B cell (primary cell): ENCODE measurements at regions of chr1 and their contacts with region 1.

Region 1: DNA sequence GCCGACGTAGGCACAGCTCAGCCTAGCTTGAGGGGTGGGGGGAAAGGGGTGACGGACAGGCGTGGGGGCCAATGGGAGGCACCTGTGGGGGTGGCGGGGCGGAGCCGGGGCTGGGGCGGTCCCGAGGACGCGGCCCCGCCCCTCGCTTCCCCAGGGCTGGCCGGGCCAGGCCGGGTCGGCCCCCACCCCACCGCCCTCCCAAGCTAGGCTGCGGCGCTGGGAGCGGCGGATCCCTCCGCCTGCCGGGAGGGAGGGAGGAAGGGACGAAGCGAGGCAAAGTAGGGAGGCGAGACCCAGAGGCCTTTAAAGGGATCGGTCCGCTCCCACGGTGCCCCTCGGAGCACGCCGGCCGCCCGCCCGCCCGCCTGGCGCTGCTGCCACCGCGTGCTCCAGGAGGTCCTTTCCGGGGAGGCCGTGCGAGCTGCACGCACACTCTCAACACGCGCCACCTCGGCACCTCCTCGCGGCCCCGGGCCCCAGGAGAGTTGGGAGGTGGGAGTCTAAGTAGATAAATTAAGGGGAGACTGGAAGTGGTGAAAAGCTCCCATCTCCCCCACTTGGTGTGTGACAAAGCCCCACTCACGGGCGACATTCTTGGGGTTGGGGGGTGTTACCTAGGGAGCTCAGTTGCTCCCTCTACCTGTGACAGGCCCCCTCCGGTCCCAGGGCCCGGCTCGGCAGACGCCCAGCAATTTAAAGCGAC is 373 bp upstream of the MEF2D start:
- DNase-seq: peak; percentile 97
- ATAC-seq: peak; percentile 66
- H3K4me3 ChIP-seq: peak overlapping the region; percentile 51 to 99 (median 91)
- H3K4me3 Mint-ChIP-seq: peak overlapping the region; percentile 93
- H3K27ac ChIP-seq: peak overlapping the region; percentile 94 to 96
- H3K27ac Mint-ChIP-seq: peak overlapping the region; percentile 99
- H3K4me1 ChIP-seq: peaks cover 74 to 79% of the 10 kb centered on the region in 2 donors
- H3K4me1 Mint-ChIP-seq: peaks cover 78% of the 10 kb centered on the region
- H3K27me3 ChIP-seq: no peaks in the 10 kb centered on the region
- H3K27me3 Mint-ChIP-seq: no peaks in the 10 kb centered on the region
- CTCF ChIP-seq: peak; percentile 80

Region 2: GRCh38 chr1:156096640-156097391 is 404.1 kb before region 1 on chr1:
- CTCF ChIA-PET with region 1: no interaction called
- POLR2A ChIA-PET with region 1: no interaction called
- intact Hi-C with region 1: loop called (anchors 2 kb)
- DNase-seq: peak; percentile 97
- ATAC-seq: peak; percentile 87
- H3K4me3 ChIP-seq: peak overlapping the region in 3 of 5 experiments; percentile 3 to 47 (median 30)
- H3K4me3 Mint-ChIP-seq: peak overlapping the region; percentile 72
- H3K27ac ChIP-seq: peak overlapping the region; percentile 82 to 93
- H3K27ac Mint-ChIP-seq: peak overlapping the region; percentile 95
- H3K4me1 ChIP-seq: peaks cover 23 to 24% of the 10 kb centered on the region in 2 donors
- H3K4me1 Mint-ChIP-seq: peaks cover 31% of the 10 kb centered on the region
- H3K27me3 ChIP-seq: peaks cover 0 to 1% (median 0%) of the 10 kb centered on the region in 4 experiments
- H3K27me3 Mint-ChIP-seq: no peaks in the 10 kb centered on the region
- CTCF ChIP-seq: peak; percentile 95

Region 3: GRCh38 chr1:156319664-156320063 is 181.3 kb before region 1 on chr1:
- CTCF ChIA-PET with region 1: no interaction called
- POLR2A ChIA-PET with region 1: no interaction called
- intact Hi-C with region 1: no loop called
- DNase-seq: peak; percentile 47
- ATAC-seq: no peak
- H3K4me3 ChIP-seq: no peak overlapping the region
- H3K4me3 Mint-ChIP-seq: no peak overlapping the region
- H3K27ac ChIP-seq: no peak overlapping the region
- H3K27ac Mint-ChIP-seq: no peak overlapping the region
- H3K4me1 ChIP-seq: no peaks in the 10 kb centered on the region
- H3K4me1 Mint-ChIP-seq: no peaks in the 10 kb centered on the region
- H3K27me3 ChIP-seq: no peaks in the 10 kb centered on the region
- H3K27me3 Mint-ChIP-seq: no peaks in the 10 kb centered on the region
- CTCF ChIP-seq: peak; percentile 73

Region 4: DNA sequence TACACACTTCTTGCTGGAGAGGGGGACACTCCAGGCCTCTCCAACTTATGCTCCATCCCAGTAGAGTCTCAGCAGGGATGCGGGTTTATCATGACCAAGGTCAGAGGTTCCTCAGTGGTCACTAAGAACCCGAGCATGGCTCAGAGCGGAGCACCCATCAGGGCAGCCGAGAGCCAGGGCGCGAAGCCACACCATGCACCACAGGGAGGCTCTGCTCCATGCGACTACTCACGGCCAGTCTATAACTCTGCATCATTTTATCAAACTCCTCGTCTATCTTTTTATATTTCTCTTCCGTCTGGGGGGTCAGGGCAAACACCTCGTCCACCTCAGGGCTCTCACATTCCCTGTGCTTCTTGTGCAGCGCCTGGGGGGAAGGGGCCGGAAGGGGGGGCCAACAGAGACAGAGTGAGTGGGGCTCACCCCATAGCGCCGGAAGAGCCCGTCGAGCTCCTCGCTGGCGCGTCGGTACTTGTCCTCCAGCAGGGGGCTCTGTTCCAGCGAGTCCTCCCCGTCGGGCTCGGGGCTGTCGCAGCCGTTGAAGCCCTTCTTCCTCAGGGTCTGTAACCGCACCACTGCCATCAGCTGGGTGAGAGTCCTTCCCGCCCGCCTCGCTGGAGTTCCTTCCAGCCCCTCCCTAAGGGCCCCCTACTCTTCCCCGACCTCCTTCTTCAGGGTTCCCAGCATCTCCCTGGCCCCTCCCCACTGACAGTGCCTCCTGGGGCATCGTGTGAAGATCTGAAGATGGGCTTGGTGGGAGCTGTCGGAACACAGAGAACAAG is 20.3 kb before region 1 on chr1:
- CTCF ChIA-PET with region 1: interaction called, 383 read pairs
- POLR2A ChIA-PET with region 1: interaction called, 193 read pairs
- intact Hi-C with region 1: loop called (anchors 1 kb)
- DNase-seq: peak; percentile 85
- ATAC-seq: peak; percentile 84
- H3K4me3 ChIP-seq: no peak overlapping the region
- H3K4me3 Mint-ChIP-seq: peak overlapping the region; percentile 70
- H3K27ac ChIP-seq: peak overlapping the region; percentile 60 to 72
- H3K27ac Mint-ChIP-seq: peak overlapping the region; percentile 93
- H3K4me1 ChIP-seq: peaks cover 16 to 41% of the 10 kb centered on the region in 2 donors
- H3K4me1 Mint-ChIP-seq: peaks cover 54% of the 10 kb centered on the region
- H3K27me3 ChIP-seq: no peaks in the 10 kb centered on the region
- H3K27me3 Mint-ChIP-seq: no peaks in the 10 kb centered on the region
- CTCF ChIP-seq: peak; percentile 81

Region 5: DNA sequence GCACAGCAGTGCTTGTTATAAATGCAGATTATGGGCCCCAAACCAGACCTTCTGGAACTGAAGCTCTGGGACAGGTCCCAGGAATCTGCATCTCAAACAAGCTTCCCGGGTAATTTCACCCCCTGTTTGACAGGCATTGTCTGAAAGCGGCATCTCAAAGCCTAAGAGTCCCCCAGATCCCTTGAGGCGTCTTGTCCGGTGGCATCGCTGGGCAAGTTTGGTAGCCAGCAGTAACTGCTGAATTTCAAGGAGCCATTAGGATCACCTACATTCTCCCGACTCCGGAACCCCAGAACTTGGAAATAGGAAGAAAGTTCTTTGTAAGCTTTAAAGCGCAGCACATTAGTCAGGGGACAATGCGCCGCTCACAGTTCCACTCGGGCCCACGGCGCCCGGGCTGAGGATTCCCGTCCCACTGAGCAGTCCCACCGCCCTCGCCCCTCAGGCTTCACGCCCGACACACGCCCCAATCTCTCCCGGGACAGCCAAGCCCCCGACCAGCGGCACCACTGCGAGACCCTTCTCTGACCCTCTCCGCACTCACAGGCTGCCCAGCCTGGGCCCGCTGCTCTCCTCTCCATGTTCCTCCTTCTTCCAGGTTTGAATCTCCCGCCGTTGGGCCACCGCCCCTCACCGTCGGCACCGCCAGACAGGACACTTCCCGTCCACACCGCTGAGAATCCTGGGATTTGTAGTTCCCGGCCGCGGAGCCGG is 71.2 kb after region 1 on chr1 and contains the start of gene IQGAP3:
- CTCF ChIA-PET with region 1: interaction called, 6 read pairs
- POLR2A ChIA-PET with region 1: interaction called, 4 read pairs
- intact Hi-C with region 1: loop called (anchors 1 kb)
- DNase-seq: peak; percentile 88
- ATAC-seq: peak; percentile 96
- H3K4me3 ChIP-seq: peak within 1 kb of the TSS; percentile 6 to 45 (median 27)
- H3K4me3 Mint-ChIP-seq: peak within 1 kb of the TSS; percentile 85
- H3K27ac ChIP-seq: no peak within 1 kb of the TSS
- H3K27ac Mint-ChIP-seq: peak within 1 kb of the TSS; percentile 12
- H3K4me1 ChIP-seq: peaks cover 13 to 14% of the 10 kb centered on the region in 2 donors
- H3K4me1 Mint-ChIP-seq: peaks cover 13% of the 10 kb centered on the region
- H3K27me3 ChIP-seq: peaks cover 0 to 32% (median 14%) of the 10 kb centered on the region in 4 experiments
- H3K27me3 Mint-ChIP-seq: peaks cover 23% of the 10 kb centered on the region
- CTCF ChIP-seq: no peak
- total RNA-seq, gene IQGAP3: 0.07 TPM in 2 replicates

Region 6: DNA sequence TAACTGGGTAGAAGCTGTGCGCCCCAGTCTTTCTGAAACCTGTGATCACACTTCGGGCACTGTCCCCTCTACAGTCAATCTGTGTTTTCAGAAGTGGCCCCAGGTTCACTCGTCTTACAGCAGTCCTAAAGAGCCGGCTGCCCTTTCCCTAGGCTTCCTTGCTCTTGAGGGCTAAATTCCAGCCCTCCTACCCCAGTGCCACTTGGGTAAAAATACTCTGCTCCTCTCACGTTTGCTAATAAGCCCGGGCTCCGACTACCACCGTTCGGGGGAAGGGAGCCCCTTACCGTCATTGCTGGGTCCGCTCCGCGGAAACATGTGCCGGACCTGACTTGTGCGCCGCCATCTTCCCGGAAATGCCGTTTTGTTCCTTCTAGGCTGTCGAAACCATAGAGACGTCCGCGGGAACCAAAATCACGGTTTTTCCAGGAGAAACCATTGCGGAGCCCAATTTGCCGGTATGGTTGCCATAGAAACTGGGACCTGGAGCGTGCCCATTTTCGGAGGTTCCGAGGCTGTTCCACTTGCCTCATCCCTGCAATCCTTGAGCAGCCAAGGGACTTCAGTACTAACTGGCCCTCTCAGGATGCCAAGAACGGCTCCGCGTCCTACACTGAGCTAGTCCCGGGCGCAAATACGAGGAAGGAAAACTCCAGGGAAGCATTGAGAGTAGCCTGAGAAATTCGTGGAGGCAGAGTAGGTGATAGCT is 100.3 kb after region 1 on chr1 and contains the start of gene GPATCH4:
- CTCF ChIA-PET with region 1: interaction called, 8 read pairs
- POLR2A ChIA-PET with region 1: interaction called, 5 read pairs
- intact Hi-C with region 1: loop called (anchors 2 kb)
- DNase-seq: peak; percentile 84
- ATAC-seq: peak; percentile 74
- H3K4me3 ChIP-seq: peak within 1 kb of the TSS; percentile 85 to 100 (median 99)
- H3K4me3 Mint-ChIP-seq: peak within 1 kb of the TSS; percentile 97
- H3K27ac ChIP-seq: peak within 1 kb of the TSS; percentile 72 to 83
- H3K27ac Mint-ChIP-seq: peak within 1 kb of the TSS; percentile 96
- H3K4me1 ChIP-seq: peaks cover 22 to 30% of the 10 kb centered on the region in 2 donors
- H3K4me1 Mint-ChIP-seq: peaks cover 38% of the 10 kb centered on the region
- H3K27me3 ChIP-seq: no peaks in the 10 kb centered on the region
- H3K27me3 Mint-ChIP-seq: no peaks in the 10 kb centered on the region
- CTCF ChIP-seq: no peak
- total RNA-seq, gene GPATCH4: 31.4 and 38.3 TPM in 2 replicates

Region 7: GRCh38 chr1:156616463-156616862 is 115.5 kb after region 1 on chr1:
- CTCF ChIA-PET with region 1: no interaction called
- POLR2A ChIA-PET with region 1: no interaction called
- intact Hi-C with region 1: no loop called
- DNase-seq: no peak
- ATAC-seq: no peak
- H3K4me3 ChIP-seq: no peak overlapping the region
- H3K4me3 Mint-ChIP-seq: no peak overlapping the region
- H3K27ac ChIP-seq: no peak overlapping the region
- H3K27ac Mint-ChIP-seq: no peak overlapping the region
- H3K4me1 ChIP-seq: no peaks in the 10 kb centered on the region
- H3K4me1 Mint-ChIP-seq: no peaks in the 10 kb centered on the region
- H3K27me3 ChIP-seq: peaks cover 0 to 53% (median 19%) of the 10 kb centered on the region in 4 experiments
- H3K27me3 Mint-ChIP-seq: peaks cover 55% of the 10 kb centered on the region
- CTCF ChIP-seq: no peak

Region 8: GRCh38 chr1:156692925-156693847 is 192.2 kb after region 1 on chr1:
- CTCF ChIA-PET with region 1: no interaction called
- POLR2A ChIA-PET with region 1: no interaction called
- intact Hi-C with region 1: no loop called
- DNase-seq: no peak
- ATAC-seq: no peak
- H3K4me3 ChIP-seq: no peak overlapping the region
- H3K4me3 Mint-ChIP-seq: no peak overlapping the region
- H3K27ac ChIP-seq: no peak overlapping the region
- H3K27ac Mint-ChIP-seq: no peak overlapping the region
- H3K4me1 ChIP-seq: peaks cover 11 to 21% of the 10 kb centered on the region in 2 donors
- H3K4me1 Mint-ChIP-seq: peaks cover 16% of the 10 kb centered on the region
- H3K27me3 ChIP-seq: peaks cover 0 to 75% (median 35%) of the 10 kb centered on the region in 4 experiments
- H3K27me3 Mint-ChIP-seq: peaks cover 59% of the 10 kb centered on the region
- CTCF ChIP-seq: no peak

Region 9: DNA sequence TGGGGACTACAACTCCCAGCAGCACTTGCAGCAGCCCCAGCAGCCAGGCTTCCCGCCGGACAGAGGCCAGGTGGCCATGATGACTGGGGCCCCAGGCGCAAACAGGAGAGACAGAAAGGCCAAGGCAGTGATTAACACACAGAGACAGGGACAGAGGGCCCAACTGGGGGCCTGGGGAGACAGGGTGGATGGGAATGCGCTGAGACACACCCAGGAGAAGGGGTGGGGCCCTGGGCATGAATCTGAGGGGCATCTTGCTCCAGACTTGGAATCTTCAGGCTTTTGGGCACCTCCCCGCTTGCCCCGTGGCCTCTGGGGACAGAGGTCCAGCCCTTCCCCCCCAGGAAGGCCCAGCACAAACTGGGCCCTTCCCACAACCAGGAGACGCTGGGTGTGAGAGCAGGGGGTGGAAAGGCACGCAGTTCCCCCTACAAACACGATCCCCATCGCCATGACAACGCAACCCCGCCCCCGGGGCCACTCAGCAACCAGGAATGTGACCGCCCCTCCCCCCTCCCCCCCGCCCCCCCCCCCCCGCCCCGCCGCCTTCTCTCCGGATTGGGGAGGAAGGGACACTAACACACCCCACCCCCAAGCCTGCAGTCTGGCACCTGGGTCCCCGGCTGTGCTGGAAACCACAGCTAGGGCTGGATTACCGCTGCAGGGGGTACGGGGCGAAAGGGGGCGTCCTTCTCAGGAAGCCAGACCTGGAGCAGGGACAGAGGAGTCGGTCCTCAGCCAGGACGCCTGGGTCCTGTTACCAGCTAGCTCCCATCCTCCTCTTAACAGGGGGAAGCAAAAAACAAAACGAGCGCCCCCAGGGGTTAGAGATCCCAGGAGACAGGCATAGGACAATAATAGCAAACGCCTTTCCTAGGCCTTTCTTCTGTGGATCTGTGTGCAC is 246.0 kb after region 1 on chr1:
- CTCF ChIA-PET with region 1: no interaction called
- POLR2A ChIA-PET with region 1: interaction called, 3 read pairs
- intact Hi-C with region 1: loop called (anchors 2 kb)
- DNase-seq: peak; percentile 78
- ATAC-seq: peak; percentile 3
- H3K4me3 ChIP-seq: peak overlapping the region in 4 of 5 experiments; percentile 34 to 55 (median 38)
- H3K4me3 Mint-ChIP-seq: peak overlapping the region; percentile 93
- H3K27ac ChIP-seq: peak overlapping the region; percentile 80 to 88
- H3K27ac Mint-ChIP-seq: peak overlapping the region; percentile 97
- H3K4me1 ChIP-seq: peaks cover 42 to 49% of the 10 kb centered on the region in 2 donors
- H3K4me1 Mint-ChIP-seq: peaks cover 52% of the 10 kb centered on the region
- H3K27me3 ChIP-seq: no peaks in the 10 kb centered on the region
- H3K27me3 Mint-ChIP-seq: no peaks in the 10 kb centered on the region
- CTCF ChIP-seq: no peak

Region 10: GRCh38 chr1:156797212-156797871 is 296.4 kb after region 1 on chr1:
- CTCF ChIA-PET with region 1: no interaction called
- POLR2A ChIA-PET with region 1: no interaction called
- intact Hi-C with region 1: no loop called
- DNase-seq: peak; percentile 64
- ATAC-seq: peak; percentile 45
- H3K4me3 ChIP-seq: no peak overlapping the region
- H3K4me3 Mint-ChIP-seq: no peak overlapping the region
- H3K27ac ChIP-seq: no peak overlapping the region
- H3K27ac Mint-ChIP-seq: no peak overlapping the region
- H3K4me1 ChIP-seq: no peaks in the 10 kb centered on the region
- H3K4me1 Mint-ChIP-seq: peaks cover 5% of the 10 kb centered on the region
- H3K27me3 ChIP-seq: no peaks in the 10 kb centered on the region
- H3K27me3 Mint-ChIP-seq: no peaks in the 10 kb centered on the region
- CTCF ChIP-seq: peak; percentile 73